ENCODE measurements at regions of chr2 and their contacts with region 1.

Region 1: DNA sequence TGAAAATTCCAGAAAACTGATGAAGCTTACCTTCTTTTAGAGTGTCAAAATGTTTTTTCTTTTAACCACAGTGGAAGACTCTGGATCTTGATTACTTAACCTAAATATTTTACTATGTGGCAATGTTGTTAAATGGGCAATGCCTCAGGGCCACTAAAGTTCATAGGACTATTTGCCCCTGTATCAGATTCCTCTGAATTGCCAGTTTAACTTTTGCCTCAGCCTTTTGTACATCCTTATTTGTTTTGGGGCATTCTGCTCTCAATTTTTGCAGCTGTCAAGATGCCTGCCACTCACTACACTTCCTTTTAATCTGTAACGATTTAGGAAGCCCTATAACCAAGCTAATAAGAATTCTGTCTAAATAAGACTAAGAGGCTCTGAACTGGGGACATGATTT is 31.7 kb upstream of the SERTAD2 start:
- DNase-seq: no peak
- ATAC-seq: no peak
- H3K4me3 Mint-ChIP-seq: no peak overlapping the region
- H3K27ac Mint-ChIP-seq: no peak overlapping the region
- H3K4me1 Mint-ChIP-seq: peaks cover 38% of the 10 kb centered on the region
- H3K27me3 Mint-ChIP-seq: no peaks in the 10 kb centered on the region
- CTCF ChIP-seq: no peak

Region 2: DNA sequence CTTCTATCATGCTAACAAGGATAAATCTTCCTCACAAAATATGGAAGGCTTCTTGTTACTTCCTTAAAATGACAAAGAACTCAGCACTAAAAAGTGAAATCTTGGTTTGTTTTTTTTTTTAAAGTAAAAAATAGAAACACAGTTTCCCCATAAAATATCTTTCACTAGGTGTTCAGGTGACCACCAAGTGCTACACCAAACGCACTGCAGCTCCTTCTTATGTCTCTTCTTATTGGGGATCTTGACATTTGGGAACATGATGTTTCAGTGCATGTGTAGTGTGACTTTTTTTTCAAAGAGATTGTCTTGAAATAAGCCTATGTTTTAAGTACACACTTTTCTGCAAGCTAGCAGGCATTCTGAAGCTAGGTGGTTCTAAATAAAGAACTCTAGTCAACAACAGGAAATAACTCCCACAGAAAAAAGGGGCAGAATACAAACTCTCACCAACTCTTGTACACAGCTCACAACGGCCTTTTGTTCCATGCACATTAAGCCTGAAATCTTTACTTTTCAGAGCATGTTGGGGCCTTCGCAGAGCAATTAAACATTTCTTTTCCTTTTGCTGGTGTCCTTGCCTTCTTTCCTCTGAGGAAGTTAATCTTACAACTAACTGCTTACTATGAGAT is 18.5 kb before region 1 on chr2:
- CTCF ChIA-PET with region 1: no interaction called
- POLR2A ChIA-PET with region 1: interaction called, 4 read pairs
- intact Hi-C with region 1: loop called (anchors 2 kb)
- DNase-seq: no peak
- ATAC-seq: peak; percentile 28
- H3K4me3 Mint-ChIP-seq: peak overlapping the region; percentile 3
- H3K27ac Mint-ChIP-seq: peak overlapping the region; percentile 79
- H3K4me1 Mint-ChIP-seq: peaks cover 26% of the 10 kb centered on the region
- H3K27me3 Mint-ChIP-seq: no peaks in the 10 kb centered on the region
- CTCF ChIP-seq: no peak

Region 3: GRCh38 chr2:64698668-64699444 is 13.4 kb after region 1 on chr2:
- CTCF ChIA-PET with region 1: no interaction called
- POLR2A ChIA-PET with region 1: interaction called, 3 read pairs
- intact Hi-C with region 1: loop called (anchors 2 kb)
- DNase-seq: no peak
- ATAC-seq: peak; percentile 86
- H3K4me3 Mint-ChIP-seq: peak overlapping the region; percentile 52
- H3K27ac Mint-ChIP-seq: peak overlapping the region; percentile 89
- H3K4me1 Mint-ChIP-seq: peaks cover 51% of the 10 kb centered on the region
- H3K27me3 Mint-ChIP-seq: no peaks in the 10 kb centered on the region
- CTCF ChIP-seq: no peak